ENCODE measurements at regions of chr5 and their contacts with region 1.

Region 1: DNA sequence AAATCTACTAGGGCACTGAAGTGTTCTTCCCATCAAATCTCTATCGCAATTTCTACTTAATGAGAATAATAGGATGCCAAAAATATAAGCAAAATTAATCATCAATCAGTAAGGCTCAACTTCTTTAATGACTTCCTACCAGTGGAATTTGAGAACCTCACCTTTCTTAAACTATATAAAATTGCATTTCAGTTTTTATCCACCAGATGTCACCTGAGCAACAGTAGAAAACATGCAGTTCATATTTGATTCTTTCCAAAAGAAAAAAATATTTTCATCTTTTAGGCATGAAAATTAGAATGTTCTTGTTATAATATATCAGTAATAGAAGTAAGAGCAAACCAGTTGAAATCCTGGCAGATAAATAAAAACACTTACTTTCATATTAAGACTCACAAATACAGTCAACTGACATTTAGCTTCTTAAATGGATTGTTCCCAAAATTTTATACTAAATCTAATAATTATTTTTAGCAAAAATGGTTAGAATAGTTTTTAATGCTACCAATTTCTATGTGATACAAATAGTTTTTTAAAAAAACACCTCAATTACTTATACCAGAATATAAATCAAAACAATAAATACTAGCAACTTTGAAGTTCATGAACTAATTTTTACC is 13.4 kb upstream of the CCDC112 start:
- DNase-seq: no peak
- H3K4me3 ChIP-seq: no peak overlapping the region
- H3K27ac ChIP-seq: no peak overlapping the region
- H3K4me1 ChIP-seq: no peaks in the 10 kb centered on the region
- H3K27me3 ChIP-seq: no peaks in the 10 kb centered on the region
- CTCF ChIP-seq: peak; percentile 52 to 84 (median 78)
- POLR2A ChIP-seq: no peak

Region 2: GRCh38 chr5:115284021-115284420 is 25.8 kb before region 1 on chr5:
- intact Hi-C with region 1: no loop called
- DNase-seq: no peak
- H3K4me3 ChIP-seq: no peak overlapping the region
- H3K27ac ChIP-seq: no peak overlapping the region
- H3K4me1 ChIP-seq: no peaks in the 10 kb centered on the region
- H3K27me3 ChIP-seq: no peaks in the 10 kb centered on the region
- CTCF ChIP-seq: no peak
- POLR2A ChIP-seq: no peak

Region 3: DNA sequence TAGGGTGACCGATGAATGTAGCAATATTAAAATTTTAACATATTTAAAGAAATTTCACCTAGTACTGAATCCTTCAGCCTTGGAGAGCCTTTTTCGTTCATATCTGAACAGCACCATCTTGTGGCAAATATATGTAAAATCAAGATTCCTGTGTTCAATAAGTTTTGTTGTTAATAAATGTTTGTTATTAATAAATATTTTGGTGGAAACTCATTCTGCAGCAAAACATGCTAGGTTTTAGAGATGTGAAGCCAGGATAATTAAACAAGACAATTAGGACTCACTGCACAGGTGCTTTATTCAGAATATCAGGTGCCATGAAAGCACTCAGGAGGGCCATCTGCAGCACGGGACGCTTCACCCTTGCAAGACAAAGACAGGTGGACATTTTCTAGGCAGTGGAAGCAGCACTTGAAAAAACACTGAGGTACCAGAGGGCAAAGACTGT is 276.8 kb after region 1 on chr5:
- intact Hi-C with region 1: loop called (anchors 10 kb)
- DNase-seq: no peak
- H3K4me3 ChIP-seq: no peak overlapping the region
- H3K27ac ChIP-seq: no peak overlapping the region
- H3K4me1 ChIP-seq: no peaks in the 10 kb centered on the region
- H3K27me3 ChIP-seq: no peaks in the 10 kb centered on the region
- CTCF ChIP-seq: peak in 2 of 3 donors; percentile 50 to 57
- POLR2A ChIP-seq: no peak

Measured in breast epithelium (tissue), 4 donors.